Activated T-helper 1 cell treated with anti-CD3 and anti-CD28 coated beads, Interleukin-12 subunit alpha, Interleukin-12 subunit beta, Interleukin-2, Interleukin-4 antibody, amounts not matched to agents 30 ng/mL and 10 ng/mL and 1 ng/mL, durations not matched to agents 14 hours and 24 hours and 36 hours (primary cell): ENCODE measurements at regions of chr20 and their contacts with region 1.

Region 1: GRCh38 chr20:17536944-17537444 is 5.8 kb upstream of the BFSP1 start:
- DNase-seq: peak; percentile 63
- H3K4me3 Mint-ChIP-seq: no peak overlapping the region
- H3K27ac Mint-ChIP-seq: no peak overlapping the region
- H3K4me1 Mint-ChIP-seq: peaks cover 40% of the 10 kb centered on the region
- H3K27me3 Mint-ChIP-seq: peaks cover 24% of the 10 kb centered on the region

Region 2: GRCh38 chr20:17473659-17474058 is 63.3 kb before region 1 on chr20:
- intact Hi-C with region 1: no loop called
- DNase-seq: no peak
- H3K4me3 Mint-ChIP-seq: no peak overlapping the region
- H3K27ac Mint-ChIP-seq: no peak overlapping the region
- H3K4me1 Mint-ChIP-seq: no peaks in the 10 kb centered on the region
- H3K27me3 Mint-ChIP-seq: peaks cover 2% of the 10 kb centered on the region

Region 3: GRCh38 chr20:17558154-17558940 is 21.4 kb after region 1 on chr20:
- intact Hi-C with region 1: loop called (anchors 1 kb)
- DNase-seq: no peak
- H3K4me3 Mint-ChIP-seq: peak overlapping the region; percentile 71
- H3K27ac Mint-ChIP-seq: peak overlapping the region; percentile 95
- H3K4me1 Mint-ChIP-seq: peaks cover 43% of the 10 kb centered on the region
- H3K27me3 Mint-ChIP-seq: no peaks in the 10 kb centered on the region

Region 4: DNA sequence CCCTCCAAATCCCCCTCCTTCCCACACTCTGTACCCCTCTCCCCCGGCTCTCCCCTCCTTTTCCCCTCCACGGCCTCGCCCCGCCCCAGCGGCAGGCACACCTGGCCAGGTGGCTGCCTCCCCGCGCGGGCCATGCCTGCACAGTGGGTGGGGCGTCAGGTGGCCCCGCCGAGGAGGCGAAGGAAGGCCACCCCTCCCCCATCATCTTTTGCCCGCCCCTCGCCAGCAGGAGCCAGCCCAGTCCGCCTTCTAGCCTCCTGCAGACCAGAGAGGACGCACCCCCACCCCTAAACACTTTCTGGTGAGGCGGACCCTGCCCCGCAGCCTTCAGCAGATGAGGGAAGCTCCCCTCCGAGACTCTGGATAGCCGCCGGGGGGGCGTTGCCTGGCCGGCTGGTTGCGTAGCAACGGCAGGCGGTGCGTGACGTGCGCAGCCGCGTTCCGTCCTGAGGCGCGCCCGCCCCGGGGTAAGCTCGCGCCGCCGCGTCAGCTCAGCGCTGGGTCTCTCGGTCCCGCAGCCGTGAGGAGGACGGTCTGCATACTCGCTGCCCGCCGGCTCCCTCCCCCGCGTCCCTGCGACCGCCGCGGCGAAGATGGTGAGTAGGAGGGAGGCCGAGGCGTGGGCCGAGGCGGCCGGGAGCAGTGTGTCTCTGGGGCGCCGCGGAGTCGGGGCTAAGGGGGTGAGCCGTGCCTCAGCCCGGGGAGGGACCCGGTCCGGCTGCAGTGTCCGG is 32.8 kb after region 1 on chr20 and contains the start of gene DSTN:
- intact Hi-C with region 1: loop called (anchors 1 kb)
- DNase-seq: peak; percentile 86
- H3K4me3 Mint-ChIP-seq: peak within 1 kb of the TSS; percentile 94
- H3K27ac Mint-ChIP-seq: peak within 1 kb of the TSS; percentile 93
- H3K4me1 Mint-ChIP-seq: peaks cover 19% of the 10 kb centered on the region
- H3K27me3 Mint-ChIP-seq: peaks cover 6% of the 10 kb centered on the region
- total RNA-seq, gene DSTN: 58.2 and 58.8 TPM in 2 replicates

Region 5: GRCh38 chr20:17611540-17612286 is 74.7 kb after region 1 on chr20:
- intact Hi-C with region 1: loop called (anchors 1 kb)
- DNase-seq: no peak
- H3K4me3 Mint-ChIP-seq: no peak overlapping the region
- H3K27ac Mint-ChIP-seq: peak overlapping the region; percentile 97
- H3K4me1 Mint-ChIP-seq: peaks cover 27% of the 10 kb centered on the region
- H3K27me3 Mint-ChIP-seq: no peaks in the 10 kb centered on the region

Region 6: GRCh38 chr20:17617551-17618223 is 80.7 kb after region 1 on chr20:
- intact Hi-C with region 1: loop called (anchors 1 kb)
- DNase-seq: no peak
- H3K4me3 Mint-ChIP-seq: no peak overlapping the region
- H3K27ac Mint-ChIP-seq: no peak overlapping the region
- H3K4me1 Mint-ChIP-seq: peaks cover under 1% of the 10 kb centered on the region
- H3K27me3 Mint-ChIP-seq: no peaks in the 10 kb centered on the region

Region 7: GRCh38 chr20:17662333-17663039 is 125.5 kb after region 1 on chr20:
- intact Hi-C with region 1: loop called (anchors 5 kb)
- DNase-seq: no peak
- H3K4me3 Mint-ChIP-seq: no peak overlapping the region
- H3K27ac Mint-ChIP-seq: peak overlapping the region; percentile 72
- H3K4me1 Mint-ChIP-seq: peaks cover 70% of the 10 kb centered on the region
- H3K27me3 Mint-ChIP-seq: no peaks in the 10 kb centered on the region

Region 8: GRCh38 chr20:17898548-17898994 is 361.6 kb after region 1 on chr20:
- intact Hi-C with region 1: loop called (anchors 1 kb)
- DNase-seq: peak; percentile 44
- H3K4me3 Mint-ChIP-seq: no peak overlapping the region
- H3K27ac Mint-ChIP-seq: no peak overlapping the region
- H3K4me1 Mint-ChIP-seq: peaks cover 37% of the 10 kb centered on the region
- H3K27me3 Mint-ChIP-seq: peaks cover 17% of the 10 kb centered on the region